GM13977 (cell line): ENCODE measurements at regions of chr15 and their contacts with region 1.

Region 1: DNA sequence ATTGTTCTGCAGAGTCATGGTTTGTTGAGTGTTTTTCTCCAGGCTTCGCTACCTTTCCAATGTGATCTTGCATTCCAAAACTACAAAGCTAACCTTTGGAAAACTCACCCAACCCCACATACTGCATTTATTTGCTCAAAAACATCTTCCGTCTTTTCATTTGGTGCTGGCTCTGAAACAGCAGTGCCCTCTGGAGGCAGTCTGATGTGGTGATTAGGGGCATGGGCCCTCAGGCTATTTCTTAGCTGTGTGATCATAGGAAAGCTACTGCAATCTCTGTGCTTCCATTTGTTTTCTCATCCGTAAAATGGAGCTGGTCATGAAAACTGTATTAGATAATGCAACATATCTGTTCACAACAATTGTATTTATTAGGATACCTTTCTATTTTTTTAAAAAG is 47.0 kb downstream of the MTHFS start:
- DNase-seq: no peak
- CTCF ChIP-seq: peak; percentile 63

Region 2: DNA sequence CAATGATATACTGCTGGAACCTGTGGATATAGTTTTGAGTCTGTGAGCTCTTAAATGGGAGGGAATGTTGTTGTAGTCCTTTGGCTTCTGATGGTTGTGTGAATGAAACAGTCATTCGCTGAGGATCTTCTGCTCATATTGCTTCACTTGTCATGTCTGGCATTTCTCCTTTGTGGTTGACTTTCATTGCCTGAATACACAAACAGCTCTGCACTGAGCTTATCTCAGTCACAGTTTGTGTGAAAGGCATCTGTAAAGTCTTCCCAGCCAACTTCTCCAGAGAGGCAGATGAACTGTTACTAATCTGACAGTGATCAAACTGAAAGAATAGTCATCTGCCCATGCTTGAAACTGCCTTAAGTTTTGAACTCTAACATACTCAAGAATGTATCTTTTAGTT is 479.1 kb before region 1 on chr15:
- in situ Hi-C with region 1: loop called (anchors 25 kb)
- DNase-seq: no peak
- CTCF ChIP-seq: no peak

Region 3: GRCh38 chr15:79513940-79514339 is 335.8 kb before region 1 on chr15:
- in situ Hi-C with region 1: no loop called
- DNase-seq: no peak
- CTCF ChIP-seq: no peak